Activated CD4-positive, alpha-beta memory T cell treated with anti-CD3 and anti-CD28 coated beads for 36 hours (primary cell): ENCODE measurements at regions of chr12 and their contacts with region 1.

Region 1: GRCh38 chr12:6533923-6534694 is at the start of gene GAPDH:
- DNase-seq: peak; percentile 93
- H3K4me3 Mint-ChIP-seq: peak within 1 kb of the TSS; percentile 96
- H3K27ac Mint-ChIP-seq: peak within 1 kb of the TSS; percentile 100
- H3K4me1 Mint-ChIP-seq: peaks cover 44% of the 10 kb centered on the region
- H3K27me3 Mint-ChIP-seq: no peaks in the 10 kb centered on the region
- total RNA-seq, gene GAPDH: 5,823 to 5,836 TPM

Region 2: DNA sequence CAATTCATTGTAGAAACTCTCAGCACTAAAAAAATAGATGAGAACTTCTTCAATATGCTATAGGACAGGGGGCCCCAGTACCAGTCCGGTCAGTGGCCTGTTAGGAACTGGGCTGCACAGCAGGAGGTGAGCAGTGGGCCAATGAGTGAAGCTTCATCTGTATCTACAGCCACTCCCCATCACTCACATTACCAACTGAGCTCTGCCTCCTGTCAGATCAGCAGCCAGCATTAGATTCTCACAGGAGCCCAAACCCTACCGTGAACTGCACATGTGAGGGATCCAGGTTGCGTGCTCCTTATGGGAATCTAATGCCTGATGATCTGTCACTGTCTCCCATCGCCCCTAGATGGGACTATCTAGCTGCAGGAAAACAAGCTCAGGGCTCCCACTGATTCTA is 573.3 kb before region 1 on chr12:
- CTCF ChIA-PET with region 1: no interaction called
- POLR2A ChIA-PET with region 1: no interaction called
- intact Hi-C with region 1: no loop called
- DNase-seq: no peak
- H3K4me3 Mint-ChIP-seq: no peak overlapping the region
- H3K27ac Mint-ChIP-seq: no peak overlapping the region
- H3K4me1 Mint-ChIP-seq: no peaks in the 10 kb centered on the region
- H3K27me3 Mint-ChIP-seq: peaks cover 5% of the 10 kb centered on the region

Region 3: GRCh38 chr12:6335451-6336078 is 198.5 kb before region 1 on chr12:
- CTCF ChIA-PET with region 1: interaction called, 10 read pairs
- POLR2A ChIA-PET with region 1: interaction called, 7 read pairs
- intact Hi-C with region 1: loop called (anchors 2 kb)
- DNase-seq: peak; percentile 94
- H3K4me3 Mint-ChIP-seq: no peak overlapping the region
- H3K27ac Mint-ChIP-seq: no peak overlapping the region
- H3K4me1 Mint-ChIP-seq: peaks cover 20% of the 10 kb centered on the region
- H3K27me3 Mint-ChIP-seq: no peaks in the 10 kb centered on the region

Region 4: GRCh38 chr12:6461401-6462233 is 72.5 kb before region 1 on chr12:
- CTCF ChIA-PET with region 1: interaction called, 14 read pairs
- POLR2A ChIA-PET with region 1: interaction called, 54 read pairs
- intact Hi-C with region 1: loop called (anchors 2 kb)
- DNase-seq: peak; percentile 92
- H3K4me3 Mint-ChIP-seq: peak overlapping the region; percentile 76
- H3K27ac Mint-ChIP-seq: peak overlapping the region; percentile 99
- H3K4me1 Mint-ChIP-seq: peaks cover 87% of the 10 kb centered on the region
- H3K27me3 Mint-ChIP-seq: no peaks in the 10 kb centered on the region

Region 5: DNA sequence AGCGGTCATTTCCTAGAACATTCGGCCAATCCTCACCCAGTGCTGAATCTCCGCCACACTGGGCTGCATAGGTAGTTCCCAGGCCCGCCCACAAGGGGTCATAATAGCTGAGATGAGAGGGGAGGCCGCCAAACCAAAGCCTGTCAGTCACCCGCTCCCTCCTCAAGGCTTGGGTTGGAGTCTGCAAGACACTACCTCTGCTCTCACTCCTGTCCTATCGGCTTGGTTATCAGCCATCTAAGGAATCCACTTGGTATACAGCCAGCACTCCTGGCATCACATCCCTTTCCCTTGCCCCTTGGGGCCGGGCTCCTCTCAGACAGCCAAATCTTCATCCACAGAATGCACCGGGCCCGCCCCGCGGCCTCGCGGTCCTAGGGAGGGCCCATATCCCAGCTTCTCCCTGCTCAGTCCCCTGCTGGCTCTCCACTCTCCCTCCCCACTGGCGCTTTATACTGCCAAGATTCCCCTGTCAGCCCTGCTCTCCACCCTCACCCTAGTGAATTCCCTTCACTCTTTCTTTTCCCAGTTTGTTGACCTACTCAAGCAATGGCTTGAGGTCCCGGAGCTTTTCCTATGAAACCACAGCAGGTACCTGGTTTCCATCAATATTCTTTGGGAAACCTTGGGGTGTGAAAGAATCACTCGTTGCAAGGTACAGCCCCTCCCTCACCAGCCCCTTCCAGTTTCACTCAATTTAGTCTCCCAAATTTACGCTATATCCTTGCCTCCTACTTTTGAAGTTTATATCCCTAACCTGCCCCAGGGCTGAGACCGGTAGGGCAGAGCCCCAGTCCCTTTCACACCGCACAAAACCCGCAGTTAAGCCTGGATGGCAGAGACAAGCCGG is 20.3 kb after region 1 on chr12:
- CTCF ChIA-PET with region 1: interaction called, 52 read pairs
- POLR2A ChIA-PET with region 1: interaction called, 54 read pairs
- intact Hi-C with region 1: loop called (anchors 2 kb)
- DNase-seq: peak; percentile 86
- H3K4me3 Mint-ChIP-seq: peak overlapping the region; percentile 85
- H3K27ac Mint-ChIP-seq: peak overlapping the region; percentile 60
- H3K4me1 Mint-ChIP-seq: peaks cover 38% of the 10 kb centered on the region
- H3K27me3 Mint-ChIP-seq: no peaks in the 10 kb centered on the region

Region 6: GRCh38 chr12:6607751-6608591 is 73.9 kb after region 1 on chr12:
- CTCF ChIA-PET with region 1: no interaction called
- POLR2A ChIA-PET with region 1: interaction called, 8 read pairs
- intact Hi-C with region 1: loop called (anchors 2 kb)
- DNase-seq: peak; percentile 82
- H3K4me3 Mint-ChIP-seq: no peak overlapping the region
- H3K27ac Mint-ChIP-seq: no peak overlapping the region
- H3K4me1 Mint-ChIP-seq: peaks cover 53% of the 10 kb centered on the region
- H3K27me3 Mint-ChIP-seq: no peaks in the 10 kb centered on the region

Region 7: DNA sequence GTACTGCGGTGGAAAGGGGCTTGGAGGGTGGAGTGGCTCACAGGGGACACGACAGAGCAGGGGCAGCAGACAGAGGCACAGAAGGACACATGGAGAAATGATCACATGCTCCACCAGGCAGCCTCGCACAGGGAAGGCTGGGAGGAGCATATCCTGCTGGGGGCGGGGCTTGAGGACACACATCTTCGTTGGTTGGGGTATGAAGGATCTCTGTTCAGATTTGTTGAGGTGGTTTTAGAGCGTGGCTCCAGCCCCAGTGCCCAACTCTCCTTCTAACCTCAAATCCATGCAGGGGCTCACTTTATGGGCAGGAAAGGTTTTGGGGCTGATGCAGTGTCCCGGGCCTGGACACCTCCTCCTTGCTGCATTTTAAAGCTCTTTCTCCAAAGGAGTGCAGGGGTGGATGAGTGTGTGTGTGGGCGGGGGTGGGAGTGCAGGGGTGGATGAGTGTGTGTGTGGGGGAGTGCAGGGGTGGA is 293.4 kb after region 1 on chr12:
- CTCF ChIA-PET with region 1: no interaction called
- POLR2A ChIA-PET with region 1: no interaction called
- intact Hi-C with region 1: no loop called
- DNase-seq: peak; percentile 73
- H3K4me3 Mint-ChIP-seq: peak overlapping the region; percentile 9
- H3K27ac Mint-ChIP-seq: no peak overlapping the region
- H3K4me1 Mint-ChIP-seq: peaks cover 19% of the 10 kb centered on the region
- H3K27me3 Mint-ChIP-seq: peaks cover 29% of the 10 kb centered on the region